GM13976 (cell line): ENCODE measurements at regions of chr22 and their contacts with region 1.

Region 1: GRCh38 chr22:43993027-43993760 is 30.9 kb upstream of the PARVB start:
- DNase-seq: peak; percentile 88
- CTCF ChIP-seq: peak; percentile 93

Region 2: DNA sequence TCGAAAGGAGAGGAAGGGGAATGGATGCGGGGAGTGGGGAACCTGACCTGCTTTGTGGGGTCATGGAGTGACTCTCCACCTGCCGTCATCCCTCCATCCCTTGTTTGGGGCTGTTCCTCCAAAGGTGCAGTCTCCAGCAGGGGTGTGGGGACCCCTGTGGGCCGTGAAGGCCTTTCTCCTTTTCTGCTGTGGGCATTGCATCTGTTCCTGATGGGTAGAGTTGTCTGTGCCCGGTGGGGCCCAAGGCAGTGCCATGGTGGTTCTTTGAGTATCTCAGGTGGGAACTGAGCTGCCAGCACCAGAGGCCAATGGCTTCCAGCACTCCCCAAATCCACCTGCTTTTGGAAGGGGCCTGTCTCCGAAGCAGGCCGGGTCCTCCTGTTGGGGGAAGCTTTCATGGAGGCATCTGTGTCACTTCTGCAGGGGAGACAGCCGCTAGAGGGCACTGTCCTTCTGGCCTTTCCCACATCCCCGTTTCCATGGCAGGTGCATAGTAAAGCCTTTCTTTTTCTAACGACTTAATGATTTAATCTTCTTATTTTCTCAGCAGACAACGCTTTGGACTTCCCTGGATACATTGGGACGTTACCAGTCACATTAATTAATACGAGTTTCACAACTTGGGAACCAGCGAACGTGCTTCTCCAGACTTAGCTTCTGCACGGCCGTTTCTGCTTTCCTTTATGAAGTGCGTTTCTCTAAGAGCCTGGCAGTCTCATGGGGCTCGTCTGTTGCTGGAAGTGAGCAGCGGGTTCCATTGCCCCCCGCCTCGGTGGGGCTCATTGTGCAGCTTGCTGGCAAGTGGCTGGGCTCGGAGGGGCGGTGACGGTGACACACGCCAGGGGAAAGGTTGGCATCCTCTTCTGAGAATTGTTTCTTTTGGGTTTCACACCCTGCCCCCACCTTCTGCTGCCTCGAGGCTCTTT is 88.0 kb after region 1 on chr22:
- in situ Hi-C with region 1: loop called (anchors 10 kb)
- DNase-seq: peak; percentile 86
- CTCF ChIP-seq: peak; percentile 80

Region 3: DNA sequence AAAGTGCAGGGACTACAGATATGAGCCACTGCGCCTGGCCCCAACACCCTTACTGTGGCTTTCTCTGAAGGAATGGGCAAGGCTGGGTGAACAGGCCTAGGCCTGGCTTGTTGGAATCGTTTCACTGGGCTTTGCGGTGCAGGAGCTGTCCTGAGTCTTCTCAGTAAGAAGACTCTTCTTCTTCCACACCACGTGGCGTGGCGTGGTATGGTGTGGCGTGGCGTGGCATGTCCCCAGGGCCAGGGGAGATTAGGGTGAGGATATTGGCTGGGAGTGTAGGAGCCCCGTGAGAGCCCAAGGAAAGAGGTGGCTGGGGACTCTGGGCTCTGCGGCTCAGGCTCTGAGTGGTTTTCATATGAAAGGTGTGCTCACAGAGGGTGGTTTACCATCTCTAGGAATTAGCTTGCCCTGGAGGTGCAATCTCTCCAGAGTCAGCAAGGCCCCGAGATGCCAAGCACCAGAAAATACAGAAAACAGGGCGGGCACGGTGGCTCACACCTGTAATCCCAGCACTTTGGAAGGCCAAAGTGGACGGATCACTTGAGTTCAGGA is 101.6 kb after region 1 on chr22:
- in situ Hi-C with region 1: no loop called
- DNase-seq: no peak
- CTCF ChIP-seq: no peak

Region 4: GRCh38 chr22:44391481-44392445 is 398.6 kb after region 1 on chr22:
- in situ Hi-C with region 1: loop called (anchors 25 kb)
- DNase-seq: no peak
- CTCF ChIP-seq: no peak

Region 5: GRCh38 chr22:44625981-44626687 is 632.9 kb after region 1 on chr22:
- in situ Hi-C with region 1: loop called (anchors 25 kb)
- DNase-seq: peak; percentile 89
- CTCF ChIP-seq: peak; percentile 88